Gastrocnemius medialis (tissue), 4 donors: ENCODE measurements at regions of chr14 and their contacts with region 1.

Region 1: DNA sequence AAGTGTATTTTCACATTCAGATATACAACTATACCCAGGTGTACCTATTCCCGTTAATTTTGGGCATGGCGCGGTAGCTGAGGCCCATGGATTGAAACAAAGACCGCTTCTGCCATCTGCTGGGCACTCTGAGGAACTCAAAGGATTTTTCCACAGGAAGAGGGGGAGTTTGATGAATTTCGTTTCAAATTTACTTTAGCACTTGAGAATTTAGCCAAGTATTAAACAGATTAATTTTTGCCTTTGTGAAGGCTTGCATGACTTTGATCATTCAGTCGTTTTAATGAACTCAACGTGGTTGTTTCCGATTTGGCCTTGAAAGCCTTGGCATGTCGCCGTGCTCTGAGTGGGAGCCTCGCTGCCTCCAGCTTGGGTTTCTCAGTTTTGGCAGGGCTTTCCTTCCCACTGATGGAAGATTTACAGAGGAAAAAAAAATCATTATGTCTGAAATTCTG is 153.2 kb upstream of the DDHD1 start:
- DNase-seq: no peak
- ATAC-seq: peak; percentile 62 to 75
- H3K4me3 ChIP-seq: peak overlapping the region; percentile 42 to 57 (median 48)
- H3K27ac ChIP-seq: peak overlapping the region; percentile 31 to 45 (median 34)
- H3K4me1 ChIP-seq: peaks cover 0 to 10% of the 10 kb centered on the region in 2 donors
- H3K27me3 ChIP-seq: no peaks in the 10 kb centered on the region
- CTCF ChIP-seq: peak; percentile 63 to 72 (median 69)
- POLR2A ChIP-seq: no peak

Region 2: DNA sequence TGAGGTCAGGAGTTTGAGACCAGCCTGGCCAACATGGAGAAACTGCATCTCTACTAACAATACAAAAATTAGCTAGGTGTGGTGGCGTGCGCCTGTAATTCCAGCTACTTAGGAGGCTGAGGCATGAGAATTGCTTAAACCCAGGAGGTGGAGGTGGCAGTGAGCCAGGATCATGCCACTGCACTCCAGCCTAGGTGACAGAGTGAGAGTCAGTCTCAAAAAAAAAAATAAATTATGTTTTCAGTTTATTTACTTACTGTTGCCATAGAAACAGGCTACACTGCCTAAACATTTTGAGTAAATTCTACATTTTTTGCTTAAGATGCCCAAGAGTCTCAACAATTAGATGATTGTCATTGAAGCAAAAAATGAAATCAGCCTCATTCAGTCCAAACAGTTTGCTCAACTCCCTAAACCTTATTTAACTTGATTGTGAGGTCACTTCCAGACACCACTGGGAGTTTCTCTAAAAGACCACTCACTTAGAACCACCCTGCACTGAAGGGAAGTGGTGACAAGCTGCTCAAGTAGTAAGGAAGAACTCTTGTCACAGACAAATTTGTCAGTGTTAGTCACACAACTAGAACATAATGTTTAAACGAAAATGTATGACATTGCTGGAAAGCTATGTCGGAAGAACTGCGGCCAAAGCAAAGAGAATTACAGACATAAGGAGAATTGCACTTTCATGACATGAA is 505.1 kb before region 1 on chr14:
- in situ Hi-C with region 1: loop called in 1 of 4 experiments (anchors 25 kb)
- intact Hi-C with region 1: no loop called
- DNase-seq: no peak
- ATAC-seq: no peak
- H3K4me3 ChIP-seq: no peak overlapping the region
- H3K27ac ChIP-seq: no peak overlapping the region
- H3K4me1 ChIP-seq: no peaks in the 10 kb centered on the region
- H3K27me3 ChIP-seq: no peaks in the 10 kb centered on the region
- CTCF ChIP-seq: no peak
- POLR2A ChIP-seq: no peak